Heart right ventricle (tissue), 16 donors: ENCODE measurements at regions of chr10 and their contacts with region 1.

Region 1: DNA sequence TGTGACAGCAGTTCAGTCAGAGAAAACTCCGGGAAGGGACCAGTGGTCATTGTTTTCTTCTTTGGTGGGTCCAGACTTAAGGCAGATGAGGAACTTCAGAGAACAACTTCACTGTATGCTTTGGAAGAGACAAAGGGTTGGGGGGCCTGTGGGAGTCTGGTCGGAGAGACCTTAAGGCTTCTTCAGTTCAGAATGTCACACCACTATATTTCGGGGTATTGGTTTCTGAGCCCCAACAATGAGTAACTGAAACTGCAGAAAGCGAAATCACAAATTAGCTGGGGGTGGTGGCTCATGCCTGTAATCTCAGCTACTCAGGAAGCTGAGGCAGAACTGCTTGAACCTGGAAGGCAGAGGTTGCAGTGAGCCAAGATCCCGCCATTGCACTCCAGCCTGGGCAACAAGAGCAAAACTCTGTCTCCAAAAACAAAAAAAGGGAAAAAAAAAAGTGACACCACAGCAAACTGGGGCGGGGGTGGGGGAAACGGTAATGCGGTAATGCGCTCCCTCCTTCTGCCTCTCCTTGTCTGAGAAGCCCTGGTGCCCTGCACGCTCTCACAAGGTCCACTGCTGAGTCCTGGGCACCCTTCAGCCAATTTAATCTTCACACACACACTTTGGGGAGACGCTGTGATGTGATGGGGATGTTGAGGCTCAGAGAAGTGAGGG is 2.2 kb upstream of the ADIRF start:
- DNase-seq: no peak
- ATAC-seq: no peak
- H3K4me3 ChIP-seq: peak overlapping the region in 3 of 10 donors; percentile 26 to 33 (median 32)
- H3K27ac ChIP-seq: peak overlapping the region in 7 of 10 donors; percentile 38 to 61 (median 52)
- H3K4me1 ChIP-seq: peaks cover 9 to 55% (median 43%) of the 10 kb centered on the region in 9 donors
- H3K27me3 ChIP-seq: peaks cover 0 to 36% (median 0%) of the 10 kb centered on the region in 7 donors
- CTCF ChIP-seq: no peak

Region 2: DNA sequence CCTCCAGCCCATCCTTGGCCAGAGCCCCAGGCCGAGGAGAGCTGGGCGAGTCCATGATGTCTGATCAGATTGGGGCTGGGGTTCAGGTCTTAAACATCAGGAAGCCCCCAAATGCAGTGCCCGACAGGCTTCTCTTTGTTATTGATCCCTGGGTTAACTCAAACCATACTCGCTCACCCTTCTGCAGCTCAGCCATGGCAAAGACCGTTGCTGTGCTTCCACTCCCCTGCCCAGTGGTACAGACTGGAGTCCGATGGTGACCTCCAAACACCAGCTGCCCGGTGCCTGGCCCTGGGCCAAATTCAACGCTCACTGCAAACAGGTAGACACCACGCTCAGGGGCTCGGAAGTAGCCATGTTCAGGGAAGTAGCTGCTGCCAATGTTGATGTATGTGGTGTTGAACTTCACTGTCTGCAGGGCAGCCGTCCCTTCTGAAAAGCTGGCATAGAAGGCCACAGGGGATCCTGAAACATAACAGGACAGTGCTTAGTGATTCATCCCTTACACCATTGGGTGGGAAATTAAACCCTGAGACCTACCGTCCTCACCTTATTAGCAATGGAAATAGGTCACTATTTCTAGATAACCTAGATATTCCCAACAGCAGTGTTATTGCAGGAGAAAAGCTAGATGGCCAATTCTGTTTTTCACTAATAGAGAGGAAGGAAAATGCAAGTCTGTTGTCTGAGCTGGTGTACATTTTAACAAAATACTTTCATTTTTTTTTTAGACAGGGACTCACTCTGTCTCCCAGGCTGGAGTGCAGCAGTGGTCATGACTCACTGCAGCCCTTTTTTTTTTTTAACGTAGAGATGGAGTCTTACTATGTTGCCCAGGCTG is 29.2 kb before region 1 on chr10:
- intact Hi-C with region 1: loop called in 2 of 10 experiments (anchors 2 kb)
- DNase-seq: no peak
- ATAC-seq: no peak
- H3K4me3 ChIP-seq: no peak overlapping the region
- H3K27ac ChIP-seq: no peak overlapping the region
- H3K4me1 ChIP-seq: peaks cover 0 to 24% (median 15%) of the 10 kb centered on the region in 9 donors
- H3K27me3 ChIP-seq: no peaks in the 10 kb centered on the region
- CTCF ChIP-seq: no peak

Region 3: DNA sequence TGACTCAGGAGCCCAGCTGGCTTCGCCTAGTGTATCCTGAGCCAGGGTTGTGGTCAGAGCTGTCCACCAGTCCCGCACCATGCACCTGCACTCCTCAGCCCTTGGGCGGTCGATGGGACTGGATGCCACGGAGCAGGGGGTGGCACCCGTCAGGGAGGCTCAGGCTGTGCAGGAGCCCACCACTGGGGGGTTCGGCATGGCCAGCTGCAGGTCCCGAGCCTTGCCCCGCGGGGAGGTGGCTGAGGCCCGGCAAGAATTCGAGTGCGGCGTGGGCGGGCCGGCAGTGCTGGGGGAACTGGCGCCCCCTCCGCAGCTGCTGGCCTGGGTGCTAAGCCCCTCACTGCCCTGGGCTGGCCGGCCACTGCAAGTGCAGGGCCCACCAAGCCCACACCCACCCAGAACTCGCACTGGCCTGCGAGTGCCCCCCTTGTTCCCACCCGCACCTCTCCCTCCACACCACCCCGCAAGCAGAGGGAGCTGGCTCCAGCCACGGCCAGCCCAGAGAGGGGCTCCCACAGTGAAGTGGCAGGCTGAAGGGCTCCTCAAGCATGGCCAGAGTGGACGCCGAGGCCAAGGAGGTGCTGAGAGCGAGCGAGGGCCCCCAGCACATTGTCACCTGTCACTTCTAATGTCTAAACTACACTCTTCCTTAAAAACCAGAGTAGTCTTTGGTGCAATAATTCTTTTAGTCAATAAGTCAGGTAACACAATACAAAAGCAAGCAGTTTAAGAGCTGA is 64.9 kb after region 1 on chr10:
- intact Hi-C with region 1: no loop called
- DNase-seq: no peak
- ATAC-seq: no peak
- H3K4me3 ChIP-seq: no peak overlapping the region
- H3K27ac ChIP-seq: no peak overlapping the region
- H3K4me1 ChIP-seq: peaks cover 0 to 2% (median 0%) of the 10 kb centered on the region in 9 donors
- H3K27me3 ChIP-seq: no peaks in the 10 kb centered on the region
- CTCF ChIP-seq: no peak